ENCODE measurements at regions of chr17 and their contacts with region 1.

Region 1: DNA sequence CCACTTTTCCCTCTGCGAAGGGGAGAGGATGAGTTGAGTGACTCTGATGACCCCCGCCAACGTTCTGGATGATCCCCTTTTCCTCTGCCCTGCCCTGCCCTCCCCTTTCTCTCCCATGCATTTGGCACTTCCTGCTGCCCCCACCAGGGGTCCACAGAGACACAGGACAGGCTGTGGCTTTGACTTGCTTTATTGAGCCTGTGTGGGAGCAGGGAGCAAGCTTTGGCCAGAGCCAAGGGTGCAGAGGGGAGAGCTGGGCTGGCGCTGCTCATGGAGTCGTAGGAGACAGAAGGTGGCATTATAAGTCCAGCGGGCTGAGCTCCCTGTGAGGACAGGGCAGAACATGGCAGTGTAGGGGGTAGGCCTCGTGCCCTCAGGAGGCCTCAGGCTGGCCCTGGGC is 1.6 kb downstream of the PPY start:
- DNase-seq: no peak
- ATAC-seq: no peak
- H3K4me3 ChIP-seq: no peak overlapping the region
- H3K27ac ChIP-seq: no peak overlapping the region
- H3K4me1 ChIP-seq: peaks cover 4% of the 10 kb centered on the region
- H3K27me3 ChIP-seq: peaks cover 0 to 14% (median 4%) of the 10 kb centered on the region in 3 donors
- CTCF ChIP-seq: peak; percentile 19

Region 2: GRCh38 chr17:43888548-43888947 is 52.1 kb before region 1 on chr17:
- intact Hi-C with region 1: loop called in 1 of 2 experiments (anchors 5 kb)
- DNase-seq: no peak
- ATAC-seq: no peak
- H3K4me3 ChIP-seq: no peak overlapping the region
- H3K27ac ChIP-seq: no peak overlapping the region
- H3K4me1 ChIP-seq: no peaks in the 10 kb centered on the region
- H3K27me3 ChIP-seq: no peaks in the 10 kb centered on the region
- CTCF ChIP-seq: no peak

Region 3: GRCh38 chr17:43994272-43995149 is 53.9 kb after region 1 on chr17:
- intact Hi-C with region 1: loop called (anchors 1 kb)
- DNase-seq: peak; percentile 66 to 82
- ATAC-seq: peak; percentile 87 to 96 (median 92)
- H3K4me3 ChIP-seq: peak overlapping the region; percentile 52
- H3K27ac ChIP-seq: no peak overlapping the region
- H3K4me1 ChIP-seq: peaks cover 6% of the 10 kb centered on the region
- H3K27me3 ChIP-seq: peaks cover 0 to 23% (median 2%) of the 10 kb centered on the region in 3 donors
- CTCF ChIP-seq: peak; percentile 91

Region 4: DNA sequence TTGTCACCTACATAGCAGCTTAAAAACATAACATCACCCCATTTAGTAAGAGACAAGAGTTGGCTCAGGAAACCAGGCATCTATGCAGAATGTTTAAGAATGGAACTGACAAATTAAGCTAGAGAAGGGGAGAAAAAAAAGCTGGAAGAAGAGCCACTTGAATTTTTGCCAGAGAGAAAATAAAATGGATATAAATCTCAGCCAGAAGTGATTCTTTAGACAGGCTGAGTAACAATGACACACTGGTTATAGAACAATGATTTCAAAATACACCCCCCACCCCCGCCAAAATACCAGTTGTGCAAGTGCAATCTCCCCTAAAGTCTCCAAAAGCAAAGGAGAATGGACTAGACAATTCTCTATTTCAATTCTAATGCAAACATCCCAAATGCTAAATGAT is 103.4 kb after region 1 on chr17:
- intact Hi-C with region 1: loop called (anchors 1 to 5 kb)
- DNase-seq: no peak
- ATAC-seq: no peak
- H3K4me3 ChIP-seq: no peak overlapping the region
- H3K27ac ChIP-seq: peak overlapping the region; percentile 9
- H3K4me1 ChIP-seq: peaks cover 38% of the 10 kb centered on the region
- H3K27me3 ChIP-seq: no peaks in the 10 kb centered on the region
- CTCF ChIP-seq: no peak

Region 5: GRCh38 chr17:44110823-44111633 is 170.4 kb after region 1 on chr17:
- intact Hi-C with region 1: loop called in 1 of 2 experiments (anchors 5 kb)
- DNase-seq: peak; percentile 98 to 100
- ATAC-seq: peak; percentile 73 to 80 (median 78)
- H3K4me3 ChIP-seq: peak overlapping the region; percentile 72
- H3K27ac ChIP-seq: peak overlapping the region; percentile 96
- H3K4me1 ChIP-seq: peaks cover 98% of the 10 kb centered on the region
- H3K27me3 ChIP-seq: no peaks in the 10 kb centered on the region
- CTCF ChIP-seq: no peak

Region 6: DNA sequence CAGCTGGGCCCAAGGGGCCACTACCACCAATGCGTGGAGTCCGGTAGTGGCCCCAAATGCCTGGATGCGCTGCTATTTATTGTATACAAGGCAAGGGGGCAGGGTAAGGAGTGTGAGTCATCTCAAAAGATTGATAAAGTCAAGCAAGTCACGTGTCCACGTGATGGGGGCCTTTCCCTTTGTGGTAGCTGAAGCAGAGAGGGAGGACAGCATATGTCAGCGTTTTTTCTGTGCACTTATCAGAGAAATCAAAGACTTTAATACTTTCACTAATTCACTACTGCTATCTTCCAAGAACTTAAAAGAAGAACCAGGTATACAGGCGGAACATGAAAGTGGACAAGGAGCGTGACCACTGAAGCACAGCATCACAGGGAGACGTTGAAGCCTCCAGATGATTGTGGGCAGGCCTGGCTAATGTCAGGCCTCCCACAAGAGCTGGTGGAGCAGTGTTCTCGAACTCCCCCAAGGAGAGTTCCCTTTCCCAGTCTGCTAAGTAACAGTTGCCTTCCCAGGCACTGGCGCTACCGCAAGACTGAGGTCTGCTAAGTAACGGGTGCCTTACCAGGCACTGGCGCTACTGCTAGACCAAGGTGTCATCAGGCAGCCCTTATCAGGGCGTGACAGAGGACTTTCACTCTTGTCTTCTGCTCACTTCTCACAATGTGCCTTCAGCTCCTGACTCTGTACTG is 219.0 kb after region 1 on chr17:
- intact Hi-C with region 1: loop called in 1 of 2 experiments (anchors 10 kb)
- DNase-seq: no peak
- ATAC-seq: no peak
- H3K4me3 ChIP-seq: no peak overlapping the region
- H3K27ac ChIP-seq: no peak overlapping the region
- H3K4me1 ChIP-seq: no peaks in the 10 kb centered on the region
- H3K27me3 ChIP-seq: no peaks in the 10 kb centered on the region
- CTCF ChIP-seq: no peak

Region 7: GRCh38 chr17:45841883-45842525 is 1901.4 kb after region 1 on chr17:
- intact Hi-C with region 1: no loop called
- DNase-seq: no peak
- ATAC-seq: peak in 1 of 4 donors; percentile 40
- H3K4me3 ChIP-seq: no peak overlapping the region
- H3K27ac ChIP-seq: no peak overlapping the region
- H3K4me1 ChIP-seq: no peaks in the 10 kb centered on the region
- H3K27me3 ChIP-seq: no peaks in the 10 kb centered on the region
- CTCF ChIP-seq: no peak

Measured in psoas muscle (tissue), 8 donors.